RWPE1 (cell line): ENCODE measurements at regions of chr10 and their contacts with region 1.

Region 1: DNA sequence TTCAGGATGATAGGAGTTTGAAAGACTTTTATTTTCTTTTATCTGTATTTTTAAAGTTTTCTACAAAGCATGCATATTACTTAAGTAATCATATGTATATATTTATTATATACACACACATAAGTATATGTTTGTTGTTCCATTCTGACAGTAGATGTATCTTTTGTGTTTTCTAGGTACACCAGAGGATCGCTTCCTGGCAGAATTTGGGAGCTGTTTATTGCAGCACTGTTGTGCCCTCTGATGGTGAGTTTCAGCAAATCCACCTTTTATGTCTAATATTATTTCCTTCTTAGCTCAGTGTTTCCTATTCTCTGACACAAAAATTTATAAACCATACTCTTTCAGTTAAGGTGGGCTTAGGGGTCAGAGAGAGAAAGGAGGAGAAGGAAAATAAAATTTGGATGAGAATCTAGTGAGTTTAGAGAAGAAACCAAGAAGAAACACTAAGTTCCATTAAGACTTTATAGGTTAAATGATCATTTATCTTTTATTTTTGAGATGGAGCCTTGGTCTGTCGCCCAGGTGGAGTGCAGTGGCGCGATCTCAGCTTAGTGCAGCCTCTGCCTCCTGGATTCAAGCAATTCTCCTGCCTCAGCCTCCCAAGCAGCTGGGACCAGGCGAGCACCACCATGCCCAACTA is 59.2 kb upstream of the OIT3 start:
- DNase-seq: peak; percentile 46
- H3K27ac ChIP-seq: no peak overlapping the region
- CTCF ChIP-seq: peak; percentile 60

Region 2: DNA sequence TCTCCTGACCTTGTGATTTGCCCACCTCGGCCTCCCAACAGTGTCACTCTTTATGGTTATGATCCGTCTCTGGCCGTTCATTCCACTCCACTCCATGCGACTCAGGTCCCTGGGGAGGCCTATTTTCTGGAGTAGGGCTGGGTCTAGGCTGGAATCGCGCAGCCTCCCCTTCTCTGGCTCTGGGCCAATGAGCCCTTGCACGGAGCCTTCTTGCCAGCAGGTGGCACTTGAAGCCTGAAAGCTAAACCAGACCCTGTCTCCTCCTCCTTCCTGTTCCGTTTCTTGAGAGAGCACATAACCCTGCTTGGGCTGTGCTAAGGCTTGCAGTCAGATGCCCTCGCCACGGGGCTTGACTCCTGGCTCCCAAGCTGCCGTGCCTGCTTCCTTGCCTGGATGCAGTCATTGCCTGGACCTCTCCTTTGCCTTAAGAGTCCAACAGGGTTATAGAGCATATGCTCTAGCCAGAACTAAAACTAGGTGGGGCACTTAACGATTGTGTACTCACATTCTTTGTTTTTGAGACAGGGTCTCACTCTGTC is 470.0 kb before region 1 on chr10:
- CTCF ChIA-PET with region 1: interaction called, 15 read pairs
- POLR2A ChIA-PET with region 1: no interaction called
- DNase-seq: peak; percentile 88
- H3K27ac ChIP-seq: peak overlapping the region; percentile 73
- CTCF ChIP-seq: peak; percentile 89

Region 3: GRCh38 chr10:72692057-72692910 is 142.0 kb before region 1 on chr10 and contains the start of gene MCU:
- CTCF ChIA-PET with region 1: interaction called, 17 read pairs
- POLR2A ChIA-PET with region 1: no interaction called
- DNase-seq: peak; percentile 32
- H3K27ac ChIP-seq: peak within 1 kb of the TSS; percentile 84
- CTCF ChIP-seq: no peak

Region 4: GRCh38 chr10:72889391-72889831 is 55.1 kb after region 1 on chr10:
- CTCF ChIA-PET with region 1: no interaction called
- POLR2A ChIA-PET with region 1: no interaction called
- DNase-seq: peak; percentile 82
- H3K27ac ChIP-seq: no peak overlapping the region
- CTCF ChIP-seq: no peak